Activated naive CD4-positive, alpha-beta T cell treated with anti-CD3 and anti-CD28 coated beads for 36 hours (primary cell): ENCODE measurements at regions of chr14 and their contacts with region 1.

Region 1: GRCh38 chr14:37874429-37875191 is 279.2 kb downstream of the TTC6 start:
- DNase-seq: peak; percentile 90
- H3K4me3 Mint-ChIP-seq: no peak overlapping the region
- H3K27ac Mint-ChIP-seq: no peak overlapping the region
- H3K4me1 Mint-ChIP-seq: peaks cover 6% of the 10 kb centered on the region
- H3K27me3 Mint-ChIP-seq: no peaks in the 10 kb centered on the region

Region 2: DNA sequence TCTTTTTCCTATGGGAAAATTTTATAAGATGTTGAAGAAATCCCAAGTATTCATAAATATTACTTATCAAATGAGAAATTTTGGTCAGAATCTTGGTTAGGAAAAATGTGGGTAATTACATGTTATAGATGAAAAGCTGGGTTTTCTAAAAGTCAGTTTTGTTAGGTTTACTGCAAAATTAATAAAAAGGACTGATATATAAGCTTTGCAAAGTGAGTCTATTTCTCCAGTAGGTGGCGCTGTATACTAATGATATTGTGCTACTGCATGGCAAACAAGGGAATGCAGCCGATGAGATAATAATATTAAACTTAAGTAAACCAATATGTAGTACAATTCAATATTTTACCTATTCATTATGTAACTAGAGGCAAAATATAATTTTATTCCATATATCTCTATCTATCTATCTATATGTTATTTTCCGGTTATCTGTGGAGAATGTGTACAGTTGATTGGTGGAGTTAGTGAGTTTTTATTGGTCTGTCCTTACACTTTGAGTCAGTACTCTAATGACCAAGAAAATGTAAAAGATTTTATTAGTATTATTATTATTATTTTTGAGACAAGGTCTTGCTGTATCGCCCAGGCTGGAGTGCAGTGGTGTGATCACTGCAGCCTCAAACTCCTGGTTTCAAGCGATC is 643.9 kb before region 1 on chr14:
- CTCF ChIA-PET with region 1: interaction called, 15 read pairs
- intact Hi-C with region 1: loop called (anchors 1 kb)
- DNase-seq: no peak
- H3K4me3 Mint-ChIP-seq: no peak overlapping the region
- H3K27ac Mint-ChIP-seq: no peak overlapping the region
- H3K4me1 Mint-ChIP-seq: no peaks in the 10 kb centered on the region
- H3K27me3 Mint-ChIP-seq: no peaks in the 10 kb centered on the region

Region 3: GRCh38 chr14:37246427-37246914 is 628.1 kb before region 1 on chr14:
- CTCF ChIA-PET with region 1: interaction called, 14 read pairs
- intact Hi-C with region 1: loop called (anchors 1 kb)
- DNase-seq: no peak
- H3K4me3 Mint-ChIP-seq: no peak overlapping the region
- H3K27ac Mint-ChIP-seq: no peak overlapping the region
- H3K4me1 Mint-ChIP-seq: no peaks in the 10 kb centered on the region
- H3K27me3 Mint-ChIP-seq: no peaks in the 10 kb centered on the region

Region 4: GRCh38 chr14:37709419-37710195 is 165.0 kb before region 1 on chr14:
- CTCF ChIA-PET with region 1: interaction called, 6 read pairs
- intact Hi-C with region 1: loop called (anchors 1 kb)
- DNase-seq: no peak
- H3K4me3 Mint-ChIP-seq: no peak overlapping the region
- H3K27ac Mint-ChIP-seq: no peak overlapping the region
- H3K4me1 Mint-ChIP-seq: no peaks in the 10 kb centered on the region
- H3K27me3 Mint-ChIP-seq: peaks cover 5% of the 10 kb centered on the region

Region 5: DNA sequence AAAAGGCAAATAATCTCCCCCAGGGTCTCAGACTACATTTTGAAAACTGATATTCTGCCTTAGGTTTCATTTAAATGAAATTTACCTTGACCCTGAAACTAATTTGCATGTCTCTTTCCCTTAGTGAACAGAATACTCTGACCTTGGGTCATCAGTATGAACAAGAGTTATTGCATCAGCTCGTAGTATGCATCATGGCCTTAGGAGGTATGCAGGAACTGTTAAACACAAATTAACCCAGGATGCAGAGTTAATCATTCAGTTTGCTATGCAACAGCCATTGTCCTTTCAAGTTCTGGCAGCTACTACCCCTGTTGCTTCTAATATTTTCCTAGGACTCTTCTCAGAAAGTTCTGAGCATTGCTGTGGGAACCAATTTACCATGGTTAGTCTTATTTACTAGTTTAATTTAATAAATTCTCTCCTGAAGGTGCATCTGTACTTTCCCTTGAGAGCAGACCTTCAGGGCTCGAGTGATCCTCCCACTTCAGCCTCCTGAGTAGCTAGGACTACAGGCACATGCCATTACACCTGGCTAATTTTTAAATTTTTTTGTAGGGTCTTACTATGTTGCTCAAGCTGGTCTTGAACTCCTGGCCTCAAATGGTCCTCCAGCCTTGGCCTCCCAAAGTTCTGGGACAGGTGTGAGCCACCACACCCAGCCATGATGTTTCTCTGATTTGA is 152.5 kb before region 1 on chr14:
- CTCF ChIA-PET with region 1: no interaction called
- intact Hi-C with region 1: no loop called
- DNase-seq: no peak
- H3K4me3 Mint-ChIP-seq: no peak overlapping the region
- H3K27ac Mint-ChIP-seq: no peak overlapping the region
- H3K4me1 Mint-ChIP-seq: no peaks in the 10 kb centered on the region
- H3K27me3 Mint-ChIP-seq: no peaks in the 10 kb centered on the region

Region 6: GRCh38 chr14:37858733-37859132 is 15.9 kb before region 1 on chr14:
- CTCF ChIA-PET with region 1: no interaction called
- intact Hi-C with region 1: no loop called
- DNase-seq: no peak
- H3K4me3 Mint-ChIP-seq: no peak overlapping the region
- H3K27ac Mint-ChIP-seq: no peak overlapping the region
- H3K4me1 Mint-ChIP-seq: no peaks in the 10 kb centered on the region
- H3K27me3 Mint-ChIP-seq: peaks cover 6% of the 10 kb centered on the region

Region 7: DNA sequence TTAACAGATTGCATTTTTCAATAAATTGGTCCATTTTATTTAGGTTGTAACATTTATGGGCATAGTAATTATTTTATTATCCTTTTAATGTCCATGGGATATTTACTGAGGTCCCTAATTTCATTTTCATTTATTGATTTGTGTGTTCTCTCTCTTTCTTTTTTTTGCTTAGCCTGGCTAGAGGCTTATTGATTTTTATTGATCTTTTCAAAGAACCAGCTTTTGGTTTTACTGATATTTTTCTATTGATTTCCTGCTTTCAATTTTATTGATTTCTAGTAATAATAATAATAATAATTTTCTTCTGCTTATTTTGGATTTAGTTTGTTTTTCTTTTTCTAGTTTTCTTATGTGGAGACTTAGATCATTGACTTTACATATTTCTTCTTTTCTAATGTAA is 11.0 kb after region 1 on chr14:
- CTCF ChIA-PET with region 1: interaction called, 13 read pairs
- intact Hi-C with region 1: no loop called
- DNase-seq: no peak
- H3K4me3 Mint-ChIP-seq: no peak overlapping the region
- H3K27ac Mint-ChIP-seq: no peak overlapping the region
- H3K4me1 Mint-ChIP-seq: no peaks in the 10 kb centered on the region
- H3K27me3 Mint-ChIP-seq: peaks cover 6% of the 10 kb centered on the region

Region 8: GRCh38 chr14:37972941-37973887 is 98.6 kb after region 1 on chr14:
- CTCF ChIA-PET with region 1: no interaction called
- intact Hi-C with region 1: no loop called
- DNase-seq: no peak
- H3K4me3 Mint-ChIP-seq: no peak overlapping the region
- H3K27ac Mint-ChIP-seq: no peak overlapping the region
- H3K4me1 Mint-ChIP-seq: peaks cover 10% of the 10 kb centered on the region
- H3K27me3 Mint-ChIP-seq: no peaks in the 10 kb centered on the region